H1 (cell line): ENCODE measurements at regions of chr16 and their contacts with region 1.

Region 1: DNA sequence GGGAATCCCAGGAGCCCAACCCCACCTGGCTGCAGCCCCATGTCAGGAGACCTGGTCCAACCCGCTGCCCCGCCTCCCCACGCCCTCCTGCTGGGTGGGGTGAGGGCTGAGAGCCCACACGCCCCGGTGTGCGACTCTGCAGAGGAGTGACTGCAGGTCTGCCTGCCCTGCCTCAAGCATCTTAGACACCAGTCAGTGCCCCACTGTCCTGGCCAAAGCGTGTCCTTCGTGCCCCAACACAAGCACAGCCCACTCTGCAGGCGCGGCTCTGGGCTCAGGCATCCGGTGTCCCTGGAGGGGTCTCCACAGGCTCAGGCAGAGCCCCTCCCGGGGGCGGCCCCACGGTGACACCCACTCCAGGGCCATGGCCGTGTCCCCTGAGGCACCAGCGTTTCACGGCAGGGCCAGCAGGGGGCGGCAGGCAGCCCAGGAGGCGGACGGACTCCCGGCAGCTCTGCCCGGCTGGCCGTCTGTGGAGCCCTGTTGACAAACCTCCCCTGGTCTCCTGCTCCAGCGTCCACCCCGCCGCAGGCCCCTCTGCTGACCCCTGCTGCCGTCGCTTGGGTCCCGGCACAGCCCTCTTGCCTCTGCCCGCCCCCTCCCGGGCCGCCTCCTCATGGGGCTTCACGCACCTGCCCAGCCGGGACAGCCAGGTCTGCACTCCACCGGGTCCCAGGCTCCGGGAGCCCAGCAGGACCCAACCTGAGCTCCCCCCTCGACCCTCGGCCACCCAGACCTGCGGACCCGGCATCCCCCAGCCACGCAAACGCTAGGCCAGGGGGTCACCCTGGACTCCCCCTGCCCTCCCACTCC is 8.6 kb upstream of the UBE2I start:
- DNase-seq: peak in 1 of 2 experiments; percentile 94
- H3K4me3 ChIP-seq: peak overlapping the region in 1 of 4 experiments; percentile 29; a peak in 1 of 8 replicates
- H3K27ac ChIP-seq: no peak overlapping the region
- H3K4me1 ChIP-seq: peaks cover 0 to 16% (median 12%) of the 10 kb centered on the region in 4 experiments; a peak in 6 of 7 replicates
- H3K27me3 ChIP-seq: no peaks in the 10 kb centered on the region
- CTCF ChIP-seq: peak; percentile 69 to 98 (median 87)
- EP300 ChIP-seq: no peak
- POLR2A ChIP-seq: no peak
- RAD21 ChIP-seq: peak; percentile 38 to 55

Region 2: DNA sequence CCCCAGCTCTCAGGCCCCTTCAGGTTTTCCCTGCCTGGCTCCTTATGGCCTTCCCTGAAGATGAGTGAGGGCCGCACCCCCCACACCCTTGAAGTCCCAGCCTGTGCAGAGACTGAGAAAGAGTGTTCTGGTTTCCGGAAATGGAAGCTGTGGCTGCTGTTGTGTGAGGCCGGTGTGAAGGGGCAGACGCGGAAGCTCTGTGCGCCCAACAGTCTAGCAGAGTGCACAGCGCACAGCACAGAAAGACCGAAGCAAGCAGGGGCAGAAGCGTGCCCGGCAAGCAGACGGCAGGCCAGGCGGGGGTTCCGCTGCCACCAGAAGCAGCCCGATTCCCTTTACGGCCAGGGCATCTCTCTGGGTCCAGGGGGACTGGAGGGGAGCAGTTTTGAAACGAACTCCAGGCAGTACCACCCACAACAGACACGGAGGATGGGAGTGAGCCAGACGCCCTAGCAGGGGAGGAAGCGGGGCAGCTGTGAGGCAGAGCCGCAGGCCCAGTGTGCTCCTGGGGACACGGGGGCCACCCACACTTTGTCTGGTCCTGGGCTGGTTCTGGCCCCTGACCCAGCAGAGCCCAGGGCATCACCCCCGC is 92.5 kb before region 1 on chr16:
- CTCF ChIA-PET with region 1: no interaction called
- POLR2A ChIA-PET with region 1: no interaction called
- DNase-seq: no peak
- H3K4me3 ChIP-seq: no peak overlapping the region
- H3K27ac ChIP-seq: no peak overlapping the region
- H3K4me1 ChIP-seq: no peaks in the 10 kb centered on the region
- H3K27me3 ChIP-seq: no peaks in the 10 kb centered on the region
- CTCF ChIP-seq: no peak
- EP300 ChIP-seq: no peak
- POLR2A ChIP-seq: no peak
- RAD21 ChIP-seq: no peak

Region 3: DNA sequence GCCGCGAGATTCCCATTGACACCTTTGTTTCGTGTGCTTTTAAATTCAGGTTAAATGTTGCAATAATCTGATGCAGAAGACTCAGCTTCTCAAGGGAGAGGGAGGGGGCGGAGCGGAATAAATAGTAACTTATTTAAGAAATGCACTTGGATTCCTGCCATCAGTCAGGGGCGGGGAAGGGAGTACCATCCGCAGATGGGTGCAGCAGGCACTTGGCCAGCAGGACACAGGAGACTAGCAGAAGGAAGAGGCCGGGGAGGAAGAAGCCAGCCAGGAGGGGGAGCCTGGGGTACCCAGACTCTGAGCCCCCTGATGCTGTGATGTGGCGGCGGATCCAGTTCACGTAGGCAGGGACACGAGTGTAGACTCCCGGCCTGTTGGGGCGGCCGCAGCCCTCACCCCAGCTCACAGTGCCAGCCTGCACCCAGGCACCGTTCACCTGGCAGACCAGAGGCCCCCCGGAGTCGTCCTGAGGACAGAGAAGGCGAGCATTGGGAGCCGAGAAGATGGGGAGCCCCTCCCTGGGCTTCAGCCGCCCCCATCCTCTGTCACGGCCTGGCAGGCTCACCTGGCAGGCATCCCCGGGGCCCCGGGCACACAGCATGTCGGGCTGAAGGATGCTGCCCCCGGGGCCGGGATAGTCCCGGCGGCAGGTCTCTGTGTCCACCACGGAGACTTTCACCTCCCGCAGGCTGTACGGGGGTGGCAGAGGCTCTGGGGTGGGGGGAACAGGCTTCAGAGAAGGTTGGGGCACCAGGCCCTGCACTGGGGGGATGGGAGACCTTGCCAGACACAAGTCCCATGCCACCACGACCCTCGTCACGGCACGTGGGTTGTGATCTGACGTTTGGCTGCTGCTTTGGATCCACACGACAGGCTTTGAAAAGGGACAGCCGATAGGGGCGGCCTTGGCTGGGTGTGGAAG is 79.0 kb before region 1 on chr16:
- CTCF ChIA-PET with region 1: no interaction called
- POLR2A ChIA-PET with region 1: no interaction called
- DNase-seq: no peak
- H3K4me3 ChIP-seq: no peak overlapping the region
- H3K27ac ChIP-seq: no peak overlapping the region
- H3K4me1 ChIP-seq: no peaks in the 10 kb centered on the region; a peak in 1 of 7 replicates
- H3K27me3 ChIP-seq: peaks cover 0 to 2% (median under 1%) of the 10 kb centered on the region in 4 experiments; a peak in 1 of 7 replicates
- CTCF ChIP-seq: no peak
- EP300 ChIP-seq: no peak
- POLR2A ChIP-seq: no peak
- RAD21 ChIP-seq: no peak

Region 4: DNA sequence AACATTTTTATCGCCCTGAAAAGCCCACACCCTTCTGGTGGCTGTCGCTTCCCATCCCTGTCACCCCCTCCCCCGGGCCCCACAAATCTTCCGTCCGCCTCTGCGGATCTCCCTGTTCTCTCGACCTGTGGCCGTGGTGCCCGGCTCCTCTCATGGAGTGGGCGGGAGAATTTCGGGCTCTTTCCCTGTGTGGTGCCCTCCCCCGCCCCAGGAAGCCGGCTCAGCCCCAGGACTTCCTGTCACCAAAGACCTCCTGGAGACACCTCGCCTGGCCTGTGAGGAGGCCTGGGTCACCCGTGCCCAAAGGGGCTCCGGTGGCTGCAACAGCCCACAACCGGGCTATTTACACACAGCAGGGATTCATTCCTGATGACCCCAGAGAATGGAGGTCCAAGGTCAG is 17.6 kb before region 1 on chr16:
- CTCF ChIA-PET with region 1: interaction called, 35 read pairs
- POLR2A ChIA-PET with region 1: interaction called, 3 read pairs
- DNase-seq: no peak
- H3K4me3 ChIP-seq: no peak overlapping the region
- H3K27ac ChIP-seq: no peak overlapping the region
- H3K4me1 ChIP-seq: peaks cover 0 to 18% (median 10%) of the 10 kb centered on the region in 4 experiments; a peak in 6 of 7 replicates
- H3K27me3 ChIP-seq: peaks cover 3 to 5% (median 5%) of the 10 kb centered on the region in 4 experiments; a peak in 3 of 7 replicates
- CTCF ChIP-seq: no peak
- EP300 ChIP-seq: no peak
- POLR2A ChIP-seq: no peak
- RAD21 ChIP-seq: no peak

Region 5: DNA sequence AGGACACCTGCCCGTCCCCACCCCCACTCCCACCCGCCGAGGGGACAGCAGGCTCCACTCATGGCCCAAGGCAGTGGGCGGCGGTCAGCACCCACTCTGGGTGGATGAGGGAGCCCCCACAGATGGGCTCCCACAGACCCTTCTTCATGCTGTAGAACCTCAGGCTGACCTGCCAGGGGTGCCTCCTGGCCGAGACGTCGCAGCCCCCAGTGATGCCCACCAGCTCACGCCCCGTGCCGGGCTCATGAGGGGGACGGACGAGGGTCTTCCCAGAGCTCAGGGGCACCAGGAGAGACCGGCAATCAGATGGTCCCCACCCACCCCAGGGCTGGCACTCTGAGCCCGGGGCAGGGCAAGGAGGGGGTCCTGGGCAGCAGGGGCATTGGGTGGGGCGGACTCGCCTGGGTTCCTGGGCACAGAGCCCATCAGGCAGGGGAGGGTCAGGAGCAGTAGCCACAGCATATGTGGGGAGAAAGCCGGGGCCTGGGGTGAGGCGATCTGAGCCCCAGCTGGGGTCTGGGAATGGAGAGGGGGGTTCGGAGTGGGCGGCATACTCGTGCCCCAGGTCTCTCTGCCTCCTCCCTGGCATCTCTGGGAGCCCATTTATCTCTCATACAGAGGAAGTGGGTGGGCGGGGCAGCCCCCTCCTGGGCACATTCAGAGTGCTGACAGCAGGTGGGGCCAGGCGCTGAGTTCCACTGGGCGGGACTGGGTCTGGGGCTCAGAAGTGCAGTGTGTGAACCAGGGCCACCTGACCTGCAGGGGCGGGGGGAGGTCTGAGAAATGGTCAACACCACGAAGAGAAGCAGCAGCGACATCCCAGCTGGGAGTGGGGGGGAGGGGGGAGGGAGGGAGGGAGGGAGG is 12.0 kb before region 1 on chr16:
- CTCF ChIA-PET with region 1: interaction called, 35 read pairs
- POLR2A ChIA-PET with region 1: interaction called, 7 read pairs
- DNase-seq: no peak
- H3K4me3 ChIP-seq: peak overlapping the region in 3 of 4 experiments; percentile 11 to 55 (median 12); a peak in 6 of 8 replicates
- H3K27ac ChIP-seq: no peak overlapping the region
- H3K4me1 ChIP-seq: peaks cover 3 to 24% (median 13%) of the 10 kb centered on the region in 4 experiments; a peak in 6 of 7 replicates
- H3K27me3 ChIP-seq: peaks cover 7 to 39% (median 26%) of the 10 kb centered on the region in 4 experiments
- CTCF ChIP-seq: no peak
- EP300 ChIP-seq: no peak
- POLR2A ChIP-seq: no peak
- RAD21 ChIP-seq: no peak